ENCODE measurements at regions of chr12 and their contacts with region 1.

Region 1: DNA sequence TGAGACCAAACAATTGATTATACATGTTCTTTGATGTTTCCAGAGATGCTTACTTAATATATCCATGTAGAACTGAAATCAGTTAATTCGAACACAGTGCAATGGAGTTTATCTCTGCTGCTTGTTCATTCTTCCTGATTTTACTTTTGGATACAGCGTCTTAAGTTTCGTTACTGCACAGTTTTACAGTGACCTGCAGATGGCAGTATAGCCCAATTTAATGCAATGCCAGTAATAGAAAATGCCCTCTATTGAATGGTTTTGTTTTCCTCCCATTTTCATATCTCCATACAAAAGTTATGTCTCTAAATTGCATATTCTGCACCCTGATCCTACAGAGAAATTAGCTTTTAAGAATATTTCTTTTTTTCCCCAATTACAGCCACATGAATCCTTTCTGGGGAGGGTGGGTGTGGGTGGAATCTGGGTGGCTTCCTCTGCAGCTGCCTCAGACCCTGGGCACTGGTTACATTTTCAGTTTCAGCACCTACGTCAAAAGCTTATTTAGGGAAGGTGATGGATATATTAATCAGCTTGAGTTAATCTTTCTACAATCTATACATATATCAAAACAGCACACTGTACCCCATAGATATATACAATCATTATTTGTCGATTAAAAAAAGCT is 101.1 kb upstream of the DCD start:
- DNase-seq: peak; percentile 5
- ATAC-seq: peak; percentile 88
- H3K4me3 ChIP-seq: no peak overlapping the region
- H3K27ac ChIP-seq: no peak overlapping the region
- H3K4me1 ChIP-seq: no peaks in the 10 kb centered on the region
- H3K27me3 ChIP-seq: no peaks in the 10 kb centered on the region
- CTCF ChIP-seq: peak; percentile 62 to 86 (median 75)
- EP300 ChIP-seq: no peak
- POLR2A ChIP-seq: no peak
- RAD21 ChIP-seq: peak; percentile 84

Region 2: GRCh38 chr12:53638057-53638456 is 1111.2 kb before region 1 on chr12:
- CTCF ChIA-PET with region 1: no interaction called
- POLR2A ChIA-PET with region 1: no interaction called
- RAD21 ChIA-PET with region 1: no interaction called
- SMC1A ChIA-PET with region 1: no interaction called
- in situ Hi-C with region 1: no loop called
- intact Hi-C with region 1: no loop called
- DNase-seq: no peak
- ATAC-seq: no peak
- H3K4me3 ChIP-seq: no peak overlapping the region
- H3K27ac ChIP-seq: no peak overlapping the region
- H3K4me1 ChIP-seq: no peaks in the 10 kb centered on the region
- H3K27me3 ChIP-seq: no peaks in the 10 kb centered on the region
- CTCF ChIP-seq: no peak
- EP300 ChIP-seq: no peak
- POLR2A ChIP-seq: no peak
- RAD21 ChIP-seq: no peak

Region 3: DNA sequence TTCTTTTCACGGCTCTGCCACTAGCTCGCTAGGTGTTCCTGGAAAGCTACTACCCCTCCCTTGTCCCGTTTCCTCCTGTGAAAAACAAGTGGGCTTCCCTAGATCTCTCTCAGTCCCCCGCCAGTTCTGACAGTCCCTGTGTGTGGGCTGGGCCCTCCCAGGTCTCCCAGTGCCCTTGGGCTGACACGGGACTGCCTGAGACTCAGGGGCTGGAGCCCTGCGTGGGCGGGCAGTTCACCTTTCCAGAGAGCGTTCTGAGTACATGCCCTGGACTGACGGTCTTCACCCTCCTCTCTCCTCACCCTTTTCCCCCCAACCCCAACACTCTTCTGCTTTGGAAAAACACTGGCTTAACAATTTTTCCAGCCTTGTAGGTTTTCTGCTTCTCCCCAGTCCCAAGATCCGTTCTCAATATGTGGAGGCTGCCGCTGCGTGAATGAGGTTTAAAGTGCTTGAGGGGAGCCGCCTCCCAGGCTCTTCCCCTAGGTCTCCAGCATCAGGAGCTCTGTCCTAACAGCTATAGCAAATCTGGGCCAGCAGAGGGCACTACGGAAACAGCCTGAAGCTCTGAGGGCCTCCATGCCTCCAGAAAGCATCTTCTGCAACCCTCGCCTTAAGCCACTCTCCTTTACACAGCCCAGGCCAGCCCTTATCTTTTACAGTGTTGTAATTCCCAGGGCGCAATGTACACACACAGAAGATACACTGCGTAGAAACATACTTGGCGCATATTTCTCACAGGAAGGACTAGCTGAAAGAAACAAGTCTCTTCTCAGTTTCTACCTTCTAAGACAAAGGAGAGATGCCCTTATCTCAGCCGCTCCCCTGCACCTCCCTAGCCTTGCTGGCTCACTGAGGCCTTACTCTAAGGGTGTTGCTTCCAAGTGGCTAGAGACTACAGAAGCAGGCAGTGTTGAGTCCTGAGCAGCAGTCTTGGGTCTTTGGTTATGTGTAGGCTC is 90.7 kb before region 1 on chr12:
- CTCF ChIA-PET with region 1: interaction called, 11 read pairs
- POLR2A ChIA-PET with region 1: no interaction called
- RAD21 ChIA-PET with region 1: interaction called, 4 read pairs
- SMC1A ChIA-PET with region 1: interaction called, 4 read pairs
- in situ Hi-C with region 1: no loop called
- intact Hi-C with region 1: no loop called
- DNase-seq: no peak
- ATAC-seq: peak; percentile 93
- H3K4me3 ChIP-seq: no peak overlapping the region
- H3K27ac ChIP-seq: no peak overlapping the region
- H3K4me1 ChIP-seq: no peaks in the 10 kb centered on the region
- H3K27me3 ChIP-seq: peaks cover 0 to 2% of the 10 kb centered on the region in 2 experiments; a peak in 2 of 4 replicates
- CTCF ChIP-seq: peak; percentile 68 to 81 (median 70)
- EP300 ChIP-seq: no peak
- POLR2A ChIP-seq: no peak
- RAD21 ChIP-seq: peak; percentile 51

Region 4: DNA sequence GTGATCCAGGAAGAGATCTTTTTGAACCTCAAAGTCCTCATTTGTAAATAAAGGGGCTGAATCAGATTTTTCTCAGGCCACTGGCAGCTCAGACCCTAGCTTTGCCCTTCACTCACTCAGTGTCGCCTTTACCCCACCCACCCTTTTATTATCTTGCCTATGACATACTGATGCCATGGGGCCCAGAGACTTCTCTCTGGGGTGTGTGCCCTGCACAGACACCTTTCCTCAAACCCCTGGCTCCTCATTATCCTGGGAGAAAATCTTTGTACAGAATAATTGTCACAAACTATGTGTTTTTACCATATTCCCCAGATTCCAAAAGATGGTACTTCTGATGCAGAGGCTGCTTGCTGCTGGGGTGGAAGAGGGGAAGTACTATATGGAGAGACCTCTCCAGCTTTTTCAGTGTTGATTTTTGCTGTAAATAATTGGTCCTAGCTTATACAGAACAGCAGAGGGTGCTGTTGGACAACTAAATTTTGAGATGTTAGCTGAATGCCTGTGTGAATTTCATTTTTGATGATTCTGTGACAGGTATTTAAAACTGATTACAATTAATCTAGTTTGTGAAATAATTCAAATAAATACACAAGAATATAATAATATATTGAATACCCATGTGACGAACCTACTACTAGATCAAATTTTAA is 47.2 kb before region 1 on chr12:
- CTCF ChIA-PET with region 1: interaction called, 17 read pairs
- POLR2A ChIA-PET with region 1: no interaction called
- RAD21 ChIA-PET with region 1: interaction called, 13 read pairs
- SMC1A ChIA-PET with region 1: interaction called, 13 read pairs
- in situ Hi-C with region 1: no loop called
- intact Hi-C with region 1: no loop called
- DNase-seq: no peak
- ATAC-seq: peak; percentile 80
- H3K4me3 ChIP-seq: no peak overlapping the region
- H3K27ac ChIP-seq: no peak overlapping the region
- H3K4me1 ChIP-seq: no peaks in the 10 kb centered on the region
- H3K27me3 ChIP-seq: no peaks in the 10 kb centered on the region; a peak in 3 of 4 replicates
- CTCF ChIP-seq: peak; percentile 49 to 64 (median 52); a peak in 4 of 6 replicates
- EP300 ChIP-seq: no peak
- POLR2A ChIP-seq: no peak
- RAD21 ChIP-seq: peak; percentile 68

Region 5: DNA sequence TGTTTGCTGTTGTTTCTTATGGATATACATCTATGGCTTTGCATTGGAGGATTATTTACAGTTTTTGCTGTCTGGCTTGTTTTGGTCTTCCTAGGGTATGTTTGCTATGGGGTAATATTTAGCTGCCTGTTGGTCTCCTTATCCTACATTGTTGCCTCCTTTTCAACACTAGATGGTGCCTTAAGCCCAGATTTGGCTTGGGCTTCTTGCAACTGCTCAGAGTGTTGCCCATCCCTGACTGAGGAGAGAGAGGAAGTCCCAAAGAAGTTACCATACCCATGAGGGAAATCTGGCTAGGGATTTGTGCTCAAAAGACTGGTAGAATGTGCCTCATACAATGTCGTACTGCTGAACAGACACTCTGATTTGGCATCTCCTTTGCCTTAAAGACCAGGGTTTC is 10.4 kb after region 1 on chr12:
- CTCF ChIA-PET with region 1: interaction called, 25 read pairs
- POLR2A ChIA-PET with region 1: no interaction called
- RAD21 ChIA-PET with region 1: interaction called, 6 read pairs
- SMC1A ChIA-PET with region 1: interaction called, 16 read pairs
- in situ Hi-C with region 1: no loop called
- intact Hi-C with region 1: no loop called
- DNase-seq: peak; percentile 7
- ATAC-seq: peak; percentile 86
- H3K4me3 ChIP-seq: no peak overlapping the region
- H3K27ac ChIP-seq: no peak overlapping the region
- H3K4me1 ChIP-seq: no peaks in the 10 kb centered on the region
- H3K27me3 ChIP-seq: no peaks in the 10 kb centered on the region
- CTCF ChIP-seq: peak; percentile 34 to 48 (median 39); a peak in 5 of 6 replicates
- EP300 ChIP-seq: no peak
- POLR2A ChIP-seq: no peak
- RAD21 ChIP-seq: peak; percentile 72

Region 6: DNA sequence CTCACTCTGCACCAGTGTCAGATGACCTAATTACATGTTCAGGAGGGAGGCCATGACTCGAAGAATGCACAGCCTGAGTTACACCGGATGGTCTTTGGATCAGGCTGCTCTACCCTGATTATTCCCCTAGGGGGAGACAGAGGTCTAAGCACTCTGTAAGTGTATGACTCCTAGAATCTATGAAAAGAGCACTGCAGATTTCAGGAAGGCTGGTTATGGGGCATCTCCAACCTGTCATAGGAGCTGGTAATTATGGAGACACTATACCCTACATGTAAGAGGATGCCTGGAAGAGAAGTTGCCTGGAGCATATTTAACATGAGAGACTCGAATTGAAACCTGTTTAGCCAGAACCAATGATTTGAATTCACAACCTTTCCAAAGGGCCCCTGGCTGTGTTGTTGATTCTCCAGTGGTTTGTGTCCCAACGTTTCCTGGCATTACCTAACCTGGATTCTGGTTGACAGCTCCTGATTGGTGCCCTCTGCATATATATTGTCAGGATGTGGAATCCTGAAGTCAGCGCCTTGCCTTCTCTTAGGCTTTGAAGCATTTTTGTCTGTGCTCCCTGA is 104.8 kb after region 1 on chr12 and contains the start of gene MUCL1:
- CTCF ChIA-PET with region 1: interaction called, 4 read pairs
- POLR2A ChIA-PET with region 1: no interaction called
- RAD21 ChIA-PET with region 1: interaction called, 5 read pairs
- SMC1A ChIA-PET with region 1: no interaction called
- in situ Hi-C with region 1: no loop called
- intact Hi-C with region 1: loop called (anchors 2 kb)
- DNase-seq: peak; percentile 28
- ATAC-seq: peak; percentile 100
- H3K4me3 ChIP-seq: no peak within 1 kb of the TSS
- H3K27ac ChIP-seq: no peak within 1 kb of the TSS
- H3K4me1 ChIP-seq: no peaks in the 10 kb centered on the region
- H3K27me3 ChIP-seq: no peaks in the 10 kb centered on the region
- CTCF ChIP-seq: peak; percentile 83 to 92 (median 89); a peak in 5 of 6 replicates
- EP300 ChIP-seq: no peak
- POLR2A ChIP-seq: no peak
- RAD21 ChIP-seq: peak; percentile 93
- polyA plus RNA-seq, gene MUCL1: not detected

Region 7: DNA sequence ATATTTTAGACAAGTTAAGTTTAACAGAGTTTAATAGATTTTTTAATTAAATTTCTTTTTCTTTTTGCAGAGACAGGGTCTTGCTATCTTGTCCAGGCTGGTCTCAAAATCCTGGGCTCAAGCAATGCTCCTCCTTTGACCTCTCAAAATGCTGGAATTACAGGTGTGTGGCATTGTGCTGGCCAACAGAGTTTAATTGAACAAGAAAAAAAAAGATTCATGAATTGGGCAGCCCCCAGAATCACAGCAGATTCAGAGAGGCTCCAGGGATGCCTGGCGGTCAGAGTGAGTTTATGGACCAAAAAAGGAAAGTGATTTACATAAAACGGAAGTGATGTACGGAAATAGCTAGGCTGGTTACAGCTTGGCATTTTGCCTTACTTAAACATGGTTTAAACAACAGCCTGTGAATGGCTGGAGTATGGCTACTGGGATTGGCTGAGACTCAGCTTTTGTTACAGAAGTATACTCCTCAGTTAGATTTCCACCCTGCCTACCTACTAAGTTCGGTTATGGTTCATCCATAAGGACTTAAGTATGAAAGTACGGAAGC is 249.7 kb after region 1 on chr12:
- CTCF ChIA-PET with region 1: interaction called, 50 read pairs
- POLR2A ChIA-PET with region 1: no interaction called
- RAD21 ChIA-PET with region 1: no interaction called
- SMC1A ChIA-PET with region 1: interaction called, 39 read pairs
- in situ Hi-C with region 1: no loop called
- intact Hi-C with region 1: loop called (anchors 5 kb)
- DNase-seq: no peak
- ATAC-seq: no peak
- H3K4me3 ChIP-seq: no peak overlapping the region
- H3K27ac ChIP-seq: no peak overlapping the region
- H3K4me1 ChIP-seq: no peaks in the 10 kb centered on the region; the same call in 1 of the 2 replicates
- H3K27me3 ChIP-seq: no peaks in the 10 kb centered on the region
- CTCF ChIP-seq: no peak
- EP300 ChIP-seq: no peak
- POLR2A ChIP-seq: no peak
- RAD21 ChIP-seq: no peak

Region 8: GRCh38 chr12:55142669-55143565 is 393.6 kb after region 1 on chr12:
- CTCF ChIA-PET with region 1: interaction called, 6 read pairs
- POLR2A ChIA-PET with region 1: no interaction called
- RAD21 ChIA-PET with region 1: no interaction called
- SMC1A ChIA-PET with region 1: no interaction called
- in situ Hi-C with region 1: no loop called
- intact Hi-C with region 1: loop called (anchors 2 kb)
- DNase-seq: no peak
- ATAC-seq: peak; percentile 68
- H3K4me3 ChIP-seq: no peak overlapping the region
- H3K27ac ChIP-seq: no peak overlapping the region
- H3K4me1 ChIP-seq: no peaks in the 10 kb centered on the region
- H3K27me3 ChIP-seq: no peaks in the 10 kb centered on the region
- CTCF ChIP-seq: peak; percentile 61 to 72 (median 71)
- EP300 ChIP-seq: no peak
- POLR2A ChIP-seq: no peak
- RAD21 ChIP-seq: peak; percentile 58